ENCODE measurements at regions of chr2 and their contacts with region 1.

Region 1: GRCh38 chr2:218357236-218358159 is 841 bp downstream of the CATIP start:
- DNase-seq: no peak
- H3K4me3 Mint-ChIP-seq: no peak overlapping the region
- H3K27ac Mint-ChIP-seq: no peak overlapping the region
- H3K4me1 Mint-ChIP-seq: peaks cover 5% of the 10 kb centered on the region
- H3K27me3 Mint-ChIP-seq: peaks cover 5% of the 10 kb centered on the region

Region 2: GRCh38 chr2:218269899-218270720 is 87.4 kb before region 1 on chr2 and contains the starts of genes AAMP and PNKD:
- CTCF ChIA-PET with region 1: interaction called, 11 read pairs
- POLR2A ChIA-PET with region 1: no interaction called
- DNase-seq: peak; percentile 100
- H3K4me3 Mint-ChIP-seq: peak within 1 kb of the TSS; percentile 88
- H3K27ac Mint-ChIP-seq: peak within 1 kb of the TSS; percentile 92
- H3K4me1 Mint-ChIP-seq: peaks cover 47% of the 10 kb centered on the region
- H3K27me3 Mint-ChIP-seq: no peaks in the 10 kb centered on the region
- total RNA-seq, gene AAMP: 42.3 to 51.1 TPM
- total RNA-seq, gene PNKD: 34.0 to 39.1 TPM

Region 3: DNA sequence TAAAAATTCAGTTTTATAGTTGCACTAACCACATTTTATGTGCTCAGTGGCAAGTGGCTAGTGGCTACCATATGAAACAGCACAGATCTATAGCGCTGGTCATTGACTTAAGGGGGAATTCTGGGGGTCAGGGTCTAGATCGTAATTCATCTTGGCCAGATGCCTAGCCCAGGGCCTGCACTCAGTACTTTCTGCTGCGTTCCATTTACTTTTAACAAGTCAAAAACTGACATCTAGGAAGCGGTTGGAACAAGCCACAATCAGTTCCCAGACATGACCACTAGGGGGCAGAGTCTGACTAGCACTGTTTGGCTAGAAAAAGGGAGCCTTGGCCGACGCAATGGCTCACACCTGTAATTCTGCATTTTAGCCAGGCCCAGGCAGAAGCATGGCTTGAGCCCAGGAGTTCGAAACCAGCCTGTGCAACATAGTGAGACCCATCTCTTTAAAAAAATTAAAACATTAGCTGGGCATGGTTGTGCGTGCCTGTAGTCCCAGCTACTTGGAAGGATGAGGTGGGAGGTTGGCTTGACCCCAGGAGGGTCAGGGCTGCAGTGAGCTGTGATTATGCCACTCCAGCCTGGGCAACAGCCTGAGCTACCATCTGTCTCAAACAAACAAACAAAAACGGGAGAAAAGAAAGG is 56.2 kb before region 1 on chr2:
- CTCF ChIA-PET with region 1: interaction called, 20 read pairs
- POLR2A ChIA-PET with region 1: no interaction called
- DNase-seq: peak; percentile 95
- H3K4me3 Mint-ChIP-seq: no peak overlapping the region
- H3K27ac Mint-ChIP-seq: peak overlapping the region; percentile 60
- H3K4me1 Mint-ChIP-seq: peaks cover 13% of the 10 kb centered on the region
- H3K27me3 Mint-ChIP-seq: peaks cover 2% of the 10 kb centered on the region